Activated CD4-positive, alpha-beta memory T cell treated with anti-CD3 and anti-CD28 coated beads for 36 hours (primary cell): ENCODE measurements at regions of chr1 and their contacts with region 1.

Region 1: DNA sequence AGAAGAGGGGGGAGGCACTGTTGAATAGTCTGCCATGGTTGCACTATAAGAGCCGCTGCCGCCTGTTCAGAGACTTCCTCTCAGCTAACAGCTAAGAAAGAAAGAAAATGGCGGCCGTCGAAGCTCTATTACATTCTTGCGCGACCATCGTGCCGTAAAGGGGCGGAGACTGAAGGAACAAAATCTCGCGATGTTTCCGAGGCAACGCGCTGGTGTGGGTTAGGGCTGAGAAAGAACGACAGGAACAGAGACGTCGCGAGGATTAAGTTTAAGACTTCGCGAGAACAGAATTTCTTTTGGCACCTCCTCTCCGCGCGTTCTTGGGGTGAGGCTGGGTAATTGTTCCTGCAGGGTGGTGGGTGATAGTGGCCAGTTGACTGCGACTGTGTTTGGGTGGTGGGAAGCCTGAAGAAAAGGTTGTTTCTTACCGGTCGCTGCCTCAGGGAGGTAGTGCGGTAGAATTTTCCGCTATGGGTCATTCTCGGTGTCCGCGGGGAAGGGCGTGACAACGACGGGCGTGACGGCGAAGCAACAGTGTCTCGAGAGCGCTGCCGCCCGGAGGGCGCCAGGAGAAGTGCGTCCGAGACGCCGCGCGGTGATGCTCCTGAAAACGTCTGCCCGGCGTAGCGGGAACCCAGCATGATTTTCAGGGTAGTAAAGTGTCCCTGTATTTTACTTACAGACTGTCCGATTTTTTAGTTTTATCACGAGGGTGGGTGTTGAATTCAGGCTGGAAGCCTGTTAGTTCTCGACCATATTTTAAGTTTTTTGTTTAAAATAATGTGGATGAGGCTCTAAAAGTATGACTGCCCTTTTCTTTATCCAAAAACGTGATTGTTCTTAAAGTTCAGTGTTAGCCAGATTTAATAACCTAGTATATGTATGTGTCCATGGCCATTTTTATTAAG is at the start of gene FUBP1:
- DNase-seq: peak; percentile 98
- H3K4me3 Mint-ChIP-seq: no peak within 1 kb of the TSS
- H3K27ac Mint-ChIP-seq: no peak within 1 kb of the TSS
- H3K4me1 Mint-ChIP-seq: peaks cover 38% of the 10 kb centered on the region
- H3K27me3 Mint-ChIP-seq: no peaks in the 10 kb centered on the region
- total RNA-seq, gene FUBP1: 204 to 220 TPM

Region 2: DNA sequence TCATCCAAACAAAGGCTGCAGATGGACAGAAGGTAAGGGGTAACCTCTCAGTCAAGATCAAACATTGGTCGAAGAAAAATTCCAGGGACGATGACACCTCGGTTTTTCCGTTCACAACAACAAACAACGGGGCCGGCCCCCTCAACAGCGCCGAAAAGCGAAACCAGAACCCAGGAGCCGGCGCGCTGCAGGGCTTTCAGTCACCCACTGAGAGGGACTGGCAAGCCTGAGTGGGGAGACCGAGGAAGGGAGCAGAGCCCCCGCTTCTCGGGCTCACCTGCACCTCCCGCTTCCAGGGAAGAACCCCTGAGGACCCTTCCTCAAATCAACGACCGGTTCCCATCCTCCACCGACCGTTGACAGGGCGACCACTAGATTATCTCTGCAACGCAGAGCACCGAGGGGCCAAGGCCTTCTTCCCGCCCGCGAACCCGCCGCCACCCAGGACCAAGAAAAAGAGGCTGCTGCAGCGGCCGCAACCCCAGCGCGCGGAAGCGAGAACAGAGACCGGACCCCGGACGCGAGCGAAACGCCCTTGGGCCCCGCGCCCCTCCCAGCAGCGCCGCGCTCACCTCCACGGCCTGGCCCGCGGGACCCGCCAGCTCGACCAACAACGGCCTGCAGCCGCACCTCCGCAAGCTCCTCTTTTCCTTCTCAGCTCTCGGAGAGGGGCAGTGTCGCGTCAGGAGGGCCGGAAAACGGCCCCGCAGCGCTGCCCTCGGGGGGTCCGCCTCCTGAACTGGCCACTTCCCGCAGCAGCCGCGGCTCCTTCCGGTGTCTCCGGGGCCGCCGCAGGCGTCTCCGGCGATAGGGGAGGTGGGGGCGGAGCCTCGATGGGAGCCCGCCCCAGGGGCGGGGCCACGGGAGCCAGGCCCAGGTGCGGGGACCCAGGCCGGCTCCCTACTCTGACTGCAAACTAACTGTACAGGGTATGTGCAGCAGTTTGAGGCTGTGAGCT is 219.9 kb before region 1 on chr1 and contains the start of gene USP33:
- CTCF ChIA-PET with region 1: no interaction called
- POLR2A ChIA-PET with region 1: no interaction called
- intact Hi-C with region 1: loop called (anchors 1 kb)
- DNase-seq: peak; percentile 95
- H3K4me3 Mint-ChIP-seq: peak within 1 kb of the TSS; percentile 96
- H3K27ac Mint-ChIP-seq: peak within 1 kb of the TSS; percentile 94
- H3K4me1 Mint-ChIP-seq: peaks cover 47% of the 10 kb centered on the region
- H3K27me3 Mint-ChIP-seq: no peaks in the 10 kb centered on the region
- total RNA-seq, gene USP33: 37.7 to 41.0 TPM

Region 3: GRCh38 chr1:77825131-77825709 is 154.0 kb before region 1 on chr1:
- CTCF ChIA-PET with region 1: no interaction called
- POLR2A ChIA-PET with region 1: no interaction called
- intact Hi-C with region 1: loop called (anchors 5 kb)
- DNase-seq: peak; percentile 11
- H3K4me3 Mint-ChIP-seq: no peak overlapping the region
- H3K27ac Mint-ChIP-seq: no peak overlapping the region
- H3K4me1 Mint-ChIP-seq: peaks cover 2% of the 10 kb centered on the region
- H3K27me3 Mint-ChIP-seq: no peaks in the 10 kb centered on the region

Region 4: GRCh38 chr1:77961392-77961791 is 17.8 kb before region 1 on chr1:
- CTCF ChIA-PET with region 1: interaction called, 5 read pairs
- POLR2A ChIA-PET with region 1: interaction called, 7 read pairs
- intact Hi-C with region 1: loop called (anchors 2 kb)
- DNase-seq: no peak
- H3K4me3 Mint-ChIP-seq: no peak overlapping the region
- H3K27ac Mint-ChIP-seq: peak overlapping the region; percentile 58
- H3K4me1 Mint-ChIP-seq: peaks cover 37% of the 10 kb centered on the region
- H3K27me3 Mint-ChIP-seq: no peaks in the 10 kb centered on the region

Region 5: DNA sequence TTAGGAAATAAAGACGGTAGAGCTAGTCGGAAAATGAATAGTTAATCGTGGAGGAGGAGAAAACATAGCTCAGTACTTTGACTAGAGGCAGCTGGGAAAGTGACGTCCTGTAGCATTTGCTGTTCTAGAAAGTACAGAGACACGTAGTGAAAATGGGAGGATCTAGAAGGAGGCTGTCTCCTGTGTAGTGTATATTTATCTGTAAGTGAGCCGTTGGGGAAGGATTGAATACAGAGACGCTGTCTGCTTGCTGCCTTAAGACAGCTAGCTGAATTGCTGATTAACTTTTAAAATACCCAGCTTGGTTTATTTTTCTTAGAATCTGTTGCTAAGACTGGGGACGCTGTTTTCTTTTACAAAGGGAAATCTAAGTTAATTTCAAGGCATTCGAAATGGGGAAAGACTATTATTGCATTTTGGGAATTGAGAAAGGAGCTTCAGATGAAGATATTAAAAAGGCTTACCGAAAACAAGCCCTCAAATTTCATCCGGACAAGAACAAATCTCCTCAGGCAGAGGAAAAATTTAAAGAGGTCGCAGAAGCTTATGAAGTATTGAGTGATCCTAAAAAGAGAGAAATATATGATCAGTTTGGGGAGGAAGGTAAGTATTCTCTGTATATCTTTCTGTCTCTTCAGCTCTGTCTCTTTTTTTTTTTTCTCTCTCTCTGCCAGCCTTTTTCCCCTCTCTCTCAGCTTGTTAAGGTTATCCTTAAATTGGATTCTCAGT is 25.7 kb after region 1 on chr1 and contains the start of gene DNAJB4:
- CTCF ChIA-PET with region 1: interaction called, 13 read pairs
- POLR2A ChIA-PET with region 1: interaction called, 297 read pairs
- intact Hi-C with region 1: loop called (anchors 1 kb)
- DNase-seq: peak; percentile 70
- H3K4me3 Mint-ChIP-seq: peak within 1 kb of the TSS; percentile 87
- H3K27ac Mint-ChIP-seq: peak within 1 kb of the TSS; percentile 100
- H3K4me1 Mint-ChIP-seq: peaks cover 38% of the 10 kb centered on the region
- H3K27me3 Mint-ChIP-seq: peaks cover 3% of the 10 kb centered on the region
- total RNA-seq, gene DNAJB4: 9.1 to 10.8 TPM

Region 6: DNA sequence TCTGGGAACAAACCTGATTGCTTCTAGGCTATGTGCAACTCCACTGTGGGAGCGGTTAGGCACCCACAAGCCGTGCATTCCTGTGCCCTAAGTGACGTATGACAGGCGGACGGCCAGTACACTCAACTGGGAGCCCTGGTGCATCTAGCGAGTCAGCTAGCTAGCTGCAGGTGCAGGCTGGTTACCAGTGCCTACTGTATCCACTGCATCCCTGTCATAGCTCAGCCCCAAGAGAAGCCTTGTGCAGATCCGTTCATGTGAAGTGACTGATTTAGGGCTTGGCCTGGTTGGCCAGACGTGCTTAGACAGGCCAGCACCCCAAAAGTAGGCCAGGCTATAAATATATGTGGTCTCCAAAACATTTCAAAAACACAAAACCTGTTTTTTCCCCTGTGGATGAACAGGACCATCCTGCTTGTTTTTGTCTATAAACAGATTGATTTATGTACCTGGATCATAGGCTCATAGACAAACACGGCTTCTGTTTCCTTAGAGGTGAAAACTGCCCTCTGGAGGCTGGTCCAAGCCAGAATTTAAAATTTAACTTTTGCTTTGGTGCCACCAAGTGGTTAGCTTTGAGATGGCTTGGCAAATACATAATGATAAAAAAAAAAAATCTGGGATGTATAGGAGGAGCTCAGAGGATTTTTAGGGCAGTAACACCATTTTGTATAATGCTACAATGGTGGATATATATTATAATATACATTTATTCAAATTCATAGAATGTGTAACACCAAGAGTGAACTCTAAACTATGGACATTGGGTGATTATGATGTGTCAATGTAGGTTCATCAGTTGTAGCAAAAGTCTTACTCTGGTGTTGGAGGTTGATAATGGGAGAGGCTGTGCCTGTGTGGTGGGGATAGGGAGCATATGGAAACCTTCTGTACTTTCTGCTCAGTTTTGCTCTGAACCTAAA is 135.1 kb after region 1 on chr1:
- CTCF ChIA-PET with region 1: interaction called, 8 read pairs
- POLR2A ChIA-PET with region 1: interaction called, 3 read pairs
- intact Hi-C with region 1: loop called (anchors 1 kb)
- DNase-seq: peak; percentile 69
- H3K4me3 Mint-ChIP-seq: no peak overlapping the region
- H3K27ac Mint-ChIP-seq: no peak overlapping the region
- H3K4me1 Mint-ChIP-seq: no peaks in the 10 kb centered on the region
- H3K27me3 Mint-ChIP-seq: no peaks in the 10 kb centered on the region

Region 7: DNA sequence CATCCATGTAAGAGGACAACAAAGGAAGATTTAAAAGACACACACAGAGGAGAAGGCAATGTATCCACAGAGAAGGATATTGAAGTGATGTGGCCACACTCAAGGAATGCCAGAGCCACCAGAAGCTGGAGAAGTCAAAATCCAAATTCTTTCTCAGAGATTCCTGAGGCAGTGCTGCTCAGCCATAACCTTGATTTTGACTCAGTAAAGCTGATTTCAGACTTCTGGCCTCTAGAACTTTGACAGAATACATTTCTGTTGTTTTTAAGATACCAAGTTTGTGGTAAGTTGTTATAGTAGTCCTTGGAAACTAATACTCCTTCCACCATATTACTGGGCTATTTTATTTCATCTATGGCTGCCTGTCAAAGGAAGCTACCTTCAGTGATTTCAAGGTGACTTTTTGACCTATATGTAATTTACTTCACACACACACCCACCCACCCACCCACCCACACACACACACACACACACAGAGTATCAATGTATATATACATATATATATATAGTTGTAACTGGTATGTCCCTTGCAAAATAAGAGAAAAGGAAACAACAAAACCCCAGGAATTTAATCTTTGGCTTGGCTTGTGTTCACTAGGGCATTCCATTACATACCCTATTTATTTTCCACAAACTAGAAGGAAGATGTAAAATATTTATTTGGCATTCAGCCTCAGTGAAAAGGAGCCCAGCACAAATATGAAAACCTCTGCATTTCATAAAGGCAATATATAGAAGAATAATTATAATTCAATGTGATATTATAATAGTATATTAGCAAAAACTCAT is 369.5 kb after region 1 on chr1:
- CTCF ChIA-PET with region 1: no interaction called
- POLR2A ChIA-PET with region 1: no interaction called
- intact Hi-C with region 1: no loop called
- DNase-seq: no peak
- H3K4me3 Mint-ChIP-seq: no peak overlapping the region
- H3K27ac Mint-ChIP-seq: no peak overlapping the region
- H3K4me1 Mint-ChIP-seq: no peaks in the 10 kb centered on the region
- H3K27me3 Mint-ChIP-seq: no peaks in the 10 kb centered on the region

Region 8: DNA sequence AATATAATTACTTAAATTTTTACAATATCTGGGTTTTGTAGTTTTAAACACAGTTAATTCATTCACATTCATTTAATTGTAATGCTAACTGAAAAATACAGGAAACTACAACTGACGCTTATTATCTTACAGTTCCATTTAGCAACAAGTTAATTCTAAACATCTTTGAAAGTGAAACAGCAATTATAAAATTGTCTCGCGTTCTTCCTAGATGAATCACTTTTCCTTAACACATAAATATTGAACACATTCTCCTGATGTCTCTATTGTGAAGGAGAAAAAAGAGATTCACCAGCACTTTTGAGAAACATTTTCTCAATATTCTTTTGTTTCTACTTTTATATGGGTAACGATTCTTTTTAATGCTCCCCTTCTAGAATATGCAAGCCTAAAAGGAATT is 518.0 kb after region 1 on chr1:
- CTCF ChIA-PET with region 1: no interaction called
- POLR2A ChIA-PET with region 1: no interaction called
- intact Hi-C with region 1: no loop called
- DNase-seq: no peak
- H3K4me3 Mint-ChIP-seq: no peak overlapping the region
- H3K27ac Mint-ChIP-seq: no peak overlapping the region
- H3K4me1 Mint-ChIP-seq: no peaks in the 10 kb centered on the region
- H3K27me3 Mint-ChIP-seq: peaks cover 4% of the 10 kb centered on the region

Region 9: GRCh38 chr1:78649628-78650027 is 670.4 kb after region 1 on chr1 and contains the start of gene IFI44:
- CTCF ChIA-PET with region 1: no interaction called
- POLR2A ChIA-PET with region 1: no interaction called
- intact Hi-C with region 1: loop called (anchors 1 kb)
- DNase-seq: peak; percentile 85
- H3K4me3 Mint-ChIP-seq: peak within 1 kb of the TSS; percentile 79
- H3K27ac Mint-ChIP-seq: peak within 1 kb of the TSS; percentile 76
- H3K4me1 Mint-ChIP-seq: peaks cover 57% of the 10 kb centered on the region
- H3K27me3 Mint-ChIP-seq: no peaks in the 10 kb centered on the region
- total RNA-seq, gene IFI44: 56.1 to 60.1 TPM